ENCODE measurements at regions of chr3 and their contacts with region 1.

Region 1: GRCh38 chr3:161415497-161416251 is 44.4 kb upstream of the SPTSSB start:
- DNase-seq: peak; percentile 93
- H3K4me3 ChIP-seq: peak overlapping the region in 1 of 3 experiments; percentile 10
- H3K27ac ChIP-seq: peak overlapping the region; percentile 97
- H3K4me1 ChIP-seq: peaks cover 19% of the 10 kb centered on the region
- H3K27me3 ChIP-seq: no peaks in the 10 kb centered on the region
- CTCF ChIP-seq: no peak
- POLR2A ChIP-seq: no peak

Region 2: GRCh38 chr3:160697628-160698382 is 717.9 kb before region 1 on chr3:
- CTCF ChIA-PET with region 1: no interaction called
- POLR2A ChIA-PET with region 1: no interaction called
- dilution Hi-C with region 1: no loop called
- intact Hi-C with region 1: loop called (anchors 5 kb)
- DNase-seq: peak; percentile 63
- H3K4me3 ChIP-seq: no peak overlapping the region
- H3K27ac ChIP-seq: no peak overlapping the region
- H3K4me1 ChIP-seq: peaks cover 13% of the 10 kb centered on the region
- H3K27me3 ChIP-seq: no peaks in the 10 kb centered on the region
- CTCF ChIP-seq: no peak
- POLR2A ChIP-seq: no peak

Region 3: DNA sequence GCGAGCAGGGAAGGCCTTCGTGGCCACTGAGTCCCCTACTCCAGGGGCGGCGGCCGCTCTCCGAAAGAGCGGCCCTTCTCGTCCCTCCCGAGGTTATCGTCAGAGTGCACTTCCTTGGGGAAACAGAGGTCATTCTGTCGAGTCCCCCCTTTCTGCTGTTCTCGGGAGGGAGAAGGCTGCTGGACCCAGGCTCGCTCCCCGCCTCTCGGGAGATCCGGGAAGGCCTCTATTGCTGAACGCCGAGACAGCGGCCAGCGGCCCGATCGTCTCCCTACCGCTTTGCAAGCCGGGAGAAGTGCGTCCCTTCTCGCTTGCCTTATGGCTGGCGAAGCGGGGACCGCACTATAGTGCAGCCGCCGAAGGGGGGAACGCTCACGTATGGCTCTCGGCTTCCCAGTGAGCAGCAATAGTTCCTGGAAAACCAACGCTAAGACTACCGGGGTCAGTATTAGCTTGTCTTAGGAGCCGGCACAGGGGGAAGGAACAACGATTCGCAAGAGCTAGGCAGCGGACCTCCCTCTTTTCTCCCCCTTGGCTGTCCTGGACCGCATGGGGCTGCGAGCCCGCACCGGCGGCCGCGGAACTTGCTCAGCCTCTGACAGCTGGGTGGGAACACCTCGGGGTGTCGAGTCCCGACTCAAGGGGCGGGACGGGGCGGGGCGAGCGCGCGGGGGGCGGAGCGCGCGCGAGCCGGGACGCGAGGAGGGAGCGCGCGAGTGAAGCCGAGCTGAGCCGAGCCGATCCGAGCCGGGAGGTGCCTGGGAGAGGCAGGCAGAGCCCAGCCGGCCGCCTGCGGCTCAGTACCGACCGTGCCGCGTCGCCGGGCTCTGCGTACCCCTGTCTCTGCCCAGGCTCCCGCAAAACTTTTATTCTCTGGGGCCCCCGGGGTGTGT is 660.6 kb before region 1 on chr3:
- CTCF ChIA-PET with region 1: no interaction called
- POLR2A ChIA-PET with region 1: no interaction called
- dilution Hi-C with region 1: no loop called
- intact Hi-C with region 1: loop called (anchors 5 kb)
- DNase-seq: peak; percentile 95
- H3K4me3 ChIP-seq: peak overlapping the region; percentile 49 to 80 (median 71)
- H3K27ac ChIP-seq: peak overlapping the region; percentile 84
- H3K4me1 ChIP-seq: peaks cover 8% of the 10 kb centered on the region
- H3K27me3 ChIP-seq: peaks cover 5 to 13% of the 10 kb centered on the region in 2 experiments
- CTCF ChIP-seq: no peak
- POLR2A ChIP-seq: no peak

Region 4: DNA sequence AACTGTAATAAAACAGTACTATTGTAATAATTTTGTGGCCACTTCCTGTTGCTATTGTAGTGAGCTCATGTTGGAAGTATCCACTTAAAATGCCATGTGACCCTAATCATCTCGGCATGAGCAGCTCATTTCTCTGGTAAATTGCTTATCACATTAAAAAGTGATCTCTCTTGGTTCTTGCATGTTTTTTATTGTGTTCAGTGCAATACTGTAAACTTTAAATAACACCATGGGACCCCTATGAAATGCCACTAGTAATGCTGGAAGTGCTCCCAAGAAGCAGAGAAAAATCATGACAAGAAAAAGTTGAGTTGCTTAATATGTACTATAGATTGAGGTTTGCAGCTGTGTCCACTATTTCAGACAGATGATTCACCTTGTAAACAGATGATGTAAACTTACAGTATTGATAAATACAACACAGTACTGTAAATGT is 148.9 kb before region 1 on chr3:
- CTCF ChIA-PET with region 1: no interaction called
- POLR2A ChIA-PET with region 1: no interaction called
- dilution Hi-C with region 1: no loop called
- intact Hi-C with region 1: loop called (anchors 2 kb)
- DNase-seq: peak; percentile 87
- H3K4me3 ChIP-seq: no peak overlapping the region
- H3K27ac ChIP-seq: peak overlapping the region; percentile 86
- H3K4me1 ChIP-seq: peaks cover 23% of the 10 kb centered on the region
- H3K27me3 ChIP-seq: no peaks in the 10 kb centered on the region
- CTCF ChIP-seq: no peak
- POLR2A ChIP-seq: no peak

Region 5: GRCh38 chr3:161314836-161315401 is 100.8 kb before region 1 on chr3:
- CTCF ChIA-PET with region 1: no interaction called
- POLR2A ChIA-PET with region 1: no interaction called
- dilution Hi-C with region 1: no loop called
- intact Hi-C with region 1: loop called (anchors 1 kb)
- DNase-seq: peak; percentile 10
- H3K4me3 ChIP-seq: no peak overlapping the region
- H3K27ac ChIP-seq: peak overlapping the region; percentile 84
- H3K4me1 ChIP-seq: peaks cover 23% of the 10 kb centered on the region
- H3K27me3 ChIP-seq: no peaks in the 10 kb centered on the region
- CTCF ChIP-seq: no peak
- POLR2A ChIP-seq: no peak